Common myeloid progenitor, CD34-positive (primary cell): ENCODE measurements at regions of chr1 and their contacts with region 1.

Region 1: GRCh38 chr1:91165033-91165654 is 143.3 kb upstream of the ZNF644 start:
- DNase-seq: peak; percentile 56 to 73 (median 71)
- H3K4me3 ChIP-seq: no peak overlapping the region
- H3K27ac ChIP-seq: no peak overlapping the region
- H3K4me1 ChIP-seq: no peaks in the 10 kb centered on the region
- H3K27me3 ChIP-seq: peaks cover 0 to 3% (median 0%) of the 10 kb centered on the region in 5 experiments

Region 2: GRCh38 chr1:91129017-91129416 is 36.1 kb before region 1 on chr1:
- CTCF ChIA-PET with region 1: no interaction called
- POLR2A ChIA-PET with region 1: no interaction called
- DNase-seq: no peak
- H3K4me3 ChIP-seq: no peak overlapping the region
- H3K27ac ChIP-seq: no peak overlapping the region
- H3K4me1 ChIP-seq: no peaks in the 10 kb centered on the region
- H3K27me3 ChIP-seq: peaks cover 0 to 3% (median 0%) of the 10 kb centered on the region in 5 experiments

Region 3: GRCh38 chr1:91148641-91149069 is 16.5 kb before region 1 on chr1:
- CTCF ChIA-PET with region 1: interaction called, 41 read pairs
- POLR2A ChIA-PET with region 1: no interaction called
- DNase-seq: peak; percentile 52 to 87 (median 80)
- H3K4me3 ChIP-seq: peak overlapping the region in 3 of 7 experiments; percentile 2 to 65 (median 36)
- H3K27ac ChIP-seq: no peak overlapping the region
- H3K4me1 ChIP-seq: peaks cover 0 to 9% (median 7%) of the 10 kb centered on the region in 4 experiments
- H3K27me3 ChIP-seq: no peaks in the 10 kb centered on the region

Region 4: GRCh38 chr1:91282695-91283420 is 117.7 kb after region 1 on chr1:
- CTCF ChIA-PET with region 1: interaction called, 49 read pairs
- POLR2A ChIA-PET with region 1: no interaction called
- DNase-seq: peak; percentile 69 to 85 (median 81)
- H3K4me3 ChIP-seq: peak overlapping the region in 3 of 7 experiments; percentile 32 to 64 (median 49)
- H3K27ac ChIP-seq: no peak overlapping the region
- H3K4me1 ChIP-seq: peaks cover 0 to 10% (median 2%) of the 10 kb centered on the region in 4 experiments
- H3K27me3 ChIP-seq: no peaks in the 10 kb centered on the region